Posterior vena cava (tissue), 2 donors: ENCODE measurements at regions of chr2 and their contacts with region 1.

Region 1: GRCh38 chr2:178927173-178927572 is 120.0 kb upstream of the TTN start:
- DNase-seq: no peak

Region 2: GRCh38 chr2:178949584-178949983 is 22.4 kb after region 1 on chr2:
- intact Hi-C with region 1: loop called in 1 of 2 experiments (anchors 1 kb)
- DNase-seq: no peak

Region 3: DNA sequence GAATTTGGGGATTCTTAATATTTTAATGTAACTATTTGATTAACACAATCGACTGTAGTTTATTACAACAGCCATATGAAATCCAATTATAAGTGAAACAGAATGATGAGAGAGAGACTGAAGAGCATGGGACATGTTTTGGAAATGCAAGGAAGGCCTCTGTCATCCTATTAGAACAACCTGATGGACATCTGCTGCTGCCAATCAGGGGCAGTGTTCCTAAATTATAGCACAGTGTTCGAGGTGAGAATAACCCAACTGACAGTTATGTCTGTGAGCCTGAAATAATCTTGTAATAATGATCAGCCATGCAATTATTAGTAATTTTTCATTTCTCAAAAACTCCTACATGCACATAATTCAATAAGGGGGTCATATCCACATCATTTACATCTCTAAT is 49.2 kb after region 1 on chr2:
- intact Hi-C with region 1: no loop called
- DNase-seq: no peak